Activated CD4-positive, alpha-beta memory T cell treated with anti-CD3 and anti-CD28 coated beads for 36 hours (primary cell): ENCODE measurements at regions of chr20 and their contacts with region 1.

Region 1: GRCh38 chr20:53611449-53611894 is 17.8 kb upstream of the ZNF217 start:
- DNase-seq: no peak
- H3K4me3 Mint-ChIP-seq: no peak overlapping the region
- H3K27ac Mint-ChIP-seq: no peak overlapping the region
- H3K4me1 Mint-ChIP-seq: peaks cover 32% of the 10 kb centered on the region
- H3K27me3 Mint-ChIP-seq: no peaks in the 10 kb centered on the region

Region 2: GRCh38 chr20:53302695-53303412 is 308.6 kb before region 1 on chr20:
- CTCF ChIA-PET with region 1: no interaction called
- POLR2A ChIA-PET with region 1: no interaction called
- intact Hi-C with region 1: no loop called
- DNase-seq: no peak
- H3K4me3 Mint-ChIP-seq: no peak overlapping the region
- H3K27ac Mint-ChIP-seq: no peak overlapping the region
- H3K4me1 Mint-ChIP-seq: no peaks in the 10 kb centered on the region
- H3K27me3 Mint-ChIP-seq: no peaks in the 10 kb centered on the region

Region 3: GRCh38 chr20:53623454-53624211 is 12.2 kb after region 1 on chr20:
- CTCF ChIA-PET with region 1: interaction called, 25 read pairs
- POLR2A ChIA-PET with region 1: interaction called, 13 read pairs
- intact Hi-C with region 1: loop called (anchors 1 kb)
- DNase-seq: peak; percentile 59
- H3K4me3 Mint-ChIP-seq: peak overlapping the region; percentile 73
- H3K27ac Mint-ChIP-seq: peak overlapping the region; percentile 88
- H3K4me1 Mint-ChIP-seq: peaks cover 35% of the 10 kb centered on the region
- H3K27me3 Mint-ChIP-seq: no peaks in the 10 kb centered on the region